ENCODE measurements at regions of chr17 and their contacts with region 1.

Region 1: GRCh38 chr17:37301288-37301687 is 74.5 kb upstream of the C17orf78 start:
- DNase-seq: no peak
- ATAC-seq: peak; percentile 35 to 86 (median 82)
- H3K4me3 ChIP-seq: peak overlapping the region in 5 of 12 donors; percentile 5 to 24 (median 19)
- H3K27ac ChIP-seq: peak overlapping the region in 5 of 12 donors; percentile 3 to 58 (median 50)
- H3K4me1 ChIP-seq: peaks cover 3 to 34% (median 19%) of the 10 kb centered on the region in 12 donors
- H3K27me3 ChIP-seq: no peaks in the 10 kb centered on the region
- CTCF ChIP-seq: no peak
- POLR2A ChIP-seq: no peak

Region 2: DNA sequence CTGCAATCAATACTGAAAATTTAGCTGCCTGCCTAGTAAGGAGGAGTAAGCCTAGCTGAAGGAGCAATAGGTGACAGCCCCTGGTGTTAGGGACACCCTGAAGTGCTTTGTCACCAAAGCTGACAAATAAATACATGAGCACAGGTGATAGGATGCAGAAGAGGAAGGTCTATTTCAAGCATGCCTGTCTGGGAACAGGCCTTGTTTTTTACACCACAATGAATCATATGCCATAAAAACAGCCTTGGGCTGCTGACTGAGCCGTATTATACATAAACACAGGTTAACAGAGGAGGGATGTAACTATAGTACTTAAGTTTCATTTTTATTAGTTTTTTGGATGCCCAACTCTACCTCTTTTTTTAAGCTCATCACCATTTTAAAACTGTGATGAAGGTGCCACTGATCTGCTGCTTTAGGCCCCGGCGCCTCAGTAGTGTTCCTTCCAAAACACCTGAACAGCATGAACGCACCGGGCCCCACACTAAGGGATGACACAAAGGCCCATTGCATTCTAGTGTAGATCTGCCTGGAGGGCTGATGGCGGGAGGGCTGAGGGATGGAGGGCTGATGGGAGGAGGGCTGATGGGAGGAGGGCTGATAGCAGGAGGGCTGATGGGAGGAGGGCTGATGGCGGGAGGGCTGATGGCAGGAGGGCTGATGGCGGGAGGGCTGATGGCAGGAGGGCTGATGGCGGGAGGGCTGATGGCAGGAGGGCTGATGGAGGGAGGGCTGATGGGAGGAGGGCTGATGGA is 202.2 kb before region 1 on chr17:
- intact Hi-C with region 1: no loop called
- DNase-seq: no peak
- ATAC-seq: no peak
- H3K4me3 ChIP-seq: no peak overlapping the region
- H3K27ac ChIP-seq: no peak overlapping the region
- H3K4me1 ChIP-seq: peaks cover 0 to 5% (median 0%) of the 10 kb centered on the region in 12 donors
- H3K27me3 ChIP-seq: no peaks in the 10 kb centered on the region
- CTCF ChIP-seq: no peak
- POLR2A ChIP-seq: no peak

Region 3: DNA sequence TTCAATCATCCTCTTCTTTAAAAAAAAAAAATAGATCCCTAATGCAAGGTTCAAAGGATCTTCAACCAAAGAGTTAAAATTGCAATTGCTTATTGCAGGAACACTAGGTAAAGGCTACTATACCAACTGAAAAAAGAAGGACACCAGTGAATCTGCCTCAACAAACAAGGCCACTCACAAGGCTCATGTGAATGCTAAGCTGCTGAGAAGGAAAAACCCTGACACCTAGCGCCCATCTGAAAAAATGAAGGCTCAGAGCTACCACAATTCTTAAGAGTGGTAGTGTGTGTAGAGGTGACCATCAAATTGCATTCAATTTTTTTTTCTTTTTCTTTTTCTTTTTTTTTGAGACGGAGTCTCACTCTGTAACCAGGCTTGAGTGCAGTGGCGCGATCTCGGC is 127.1 kb before region 1 on chr17:
- intact Hi-C with region 1: no loop called
- DNase-seq: no peak
- ATAC-seq: no peak
- H3K4me3 ChIP-seq: no peak overlapping the region
- H3K27ac ChIP-seq: no peak overlapping the region
- H3K4me1 ChIP-seq: no peaks in the 10 kb centered on the region
- H3K27me3 ChIP-seq: no peaks in the 10 kb centered on the region
- CTCF ChIP-seq: peak in 3 of 12 donors; percentile 7 to 28 (median 15)
- POLR2A ChIP-seq: no peak

Region 4: GRCh38 chr17:37187262-37187661 is 114.0 kb before region 1 on chr17:
- intact Hi-C with region 1: no loop called
- DNase-seq: no peak
- ATAC-seq: no peak
- H3K4me3 ChIP-seq: no peak overlapping the region
- H3K27ac ChIP-seq: no peak overlapping the region
- H3K4me1 ChIP-seq: no peaks in the 10 kb centered on the region
- H3K27me3 ChIP-seq: no peaks in the 10 kb centered on the region
- CTCF ChIP-seq: no peak
- POLR2A ChIP-seq: no peak

Region 5: DNA sequence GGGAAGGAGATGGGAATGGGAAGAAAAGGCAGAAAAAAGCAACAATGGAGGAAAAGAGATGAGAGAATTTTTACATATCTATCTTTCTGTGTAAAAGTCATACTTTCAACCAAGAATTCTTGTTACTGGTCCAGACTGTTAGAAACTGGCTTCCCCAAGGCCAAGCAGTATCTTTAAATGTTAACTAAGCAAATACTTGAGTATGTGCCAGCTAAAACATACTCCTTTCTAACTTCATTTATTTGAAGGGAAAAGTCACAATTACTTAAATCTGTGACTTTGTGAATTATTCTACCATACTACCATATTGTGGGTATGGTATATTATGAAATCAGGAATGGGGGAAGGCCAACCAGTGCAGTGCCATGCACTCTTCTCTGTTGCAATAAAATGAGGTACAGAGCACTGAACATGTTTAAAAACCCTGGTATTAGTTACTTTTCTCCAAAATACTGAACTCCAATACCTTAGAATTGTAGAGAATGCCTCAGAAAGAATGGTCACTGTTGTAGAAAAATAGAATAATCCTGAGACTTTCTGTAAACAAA is 17.8 kb before region 1 on chr17:
- intact Hi-C with region 1: loop called in 1 of 10 experiments (anchors 1 kb)
- DNase-seq: no peak
- ATAC-seq: no peak
- H3K4me3 ChIP-seq: no peak overlapping the region
- H3K27ac ChIP-seq: no peak overlapping the region
- H3K4me1 ChIP-seq: no peaks in the 10 kb centered on the region
- H3K27me3 ChIP-seq: no peaks in the 10 kb centered on the region
- CTCF ChIP-seq: no peak
- POLR2A ChIP-seq: no peak

Region 6: DNA sequence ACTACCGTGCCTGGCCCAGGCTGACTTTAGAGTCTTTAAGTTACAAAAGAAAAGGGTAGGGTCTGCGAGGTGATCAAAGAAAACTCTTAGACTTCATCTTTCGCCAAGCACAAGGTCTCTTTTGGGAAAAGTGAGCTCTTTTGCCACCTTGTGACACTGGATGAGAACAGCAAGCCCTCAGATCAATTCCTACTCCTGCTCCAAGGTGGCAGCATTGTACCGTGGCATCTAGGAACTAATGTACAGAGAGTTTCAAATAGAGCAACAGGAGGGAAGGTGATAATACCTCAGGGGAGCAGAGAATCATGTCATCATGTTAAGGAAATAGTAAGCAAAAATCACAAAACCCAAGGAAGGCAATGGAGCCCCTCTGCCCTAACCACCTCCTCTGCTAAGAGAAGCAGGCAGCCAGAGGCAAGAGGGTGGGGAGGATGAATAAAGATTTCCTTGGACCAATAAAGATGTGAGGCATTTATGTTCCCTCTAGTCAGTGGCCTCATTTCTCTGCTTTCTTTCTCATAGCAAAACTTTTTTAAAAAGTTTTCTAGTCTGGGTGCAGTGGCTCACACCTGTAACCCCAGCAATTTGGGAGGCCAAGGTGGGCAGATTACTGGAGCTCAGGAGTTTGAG is 72.4 kb after region 1 on chr17:
- intact Hi-C with region 1: no loop called
- DNase-seq: peak in 3 of 5 donors; percentile 32 to 49 (median 35)
- ATAC-seq: peak; percentile 67 to 94 (median 86)
- H3K4me3 ChIP-seq: no peak overlapping the region
- H3K27ac ChIP-seq: no peak overlapping the region
- H3K4me1 ChIP-seq: peaks cover 0 to 3% (median 0%) of the 10 kb centered on the region in 12 donors
- H3K27me3 ChIP-seq: no peaks in the 10 kb centered on the region
- CTCF ChIP-seq: peak; percentile 80 to 96 (median 86)
- POLR2A ChIP-seq: no peak